Activated CD4-positive, alpha-beta T cell treated with anti-CD3 and anti-CD28 coated beads, Interleukin-2, amount 10 ng/mL, durations not matched to agents 24 days and 14 days (primary cell): ENCODE measurements at regions of chr12 and their contacts with region 1.

Region 1: DNA sequence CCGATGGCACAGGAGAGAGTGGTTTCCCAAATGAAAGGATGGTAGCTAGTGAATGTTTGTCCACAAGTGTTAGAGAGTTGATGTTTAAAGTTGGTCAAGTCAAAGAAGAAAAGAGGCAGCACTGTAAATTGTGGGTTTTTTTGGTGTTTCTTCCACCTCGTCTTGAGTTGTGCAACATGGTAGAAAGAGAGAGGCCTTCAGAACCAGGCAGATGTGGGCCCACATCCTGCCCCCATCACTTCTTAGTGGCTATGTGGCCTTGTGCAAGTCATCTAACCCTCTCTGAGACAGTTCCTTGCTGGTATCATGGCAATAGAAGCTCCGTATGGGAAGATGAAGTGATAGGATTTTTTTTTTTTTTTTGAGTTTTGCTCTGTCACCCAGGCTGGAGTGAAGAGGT is 60.8 kb downstream of the NDUFA12 start:
- DNase-seq: no peak
- H3K4me3 Mint-ChIP-seq: no peak overlapping the region
- H3K27ac Mint-ChIP-seq: peak overlapping the region; percentile 39
- H3K4me1 Mint-ChIP-seq: peaks cover 30% of the 10 kb centered on the region
- H3K27me3 Mint-ChIP-seq: peaks cover 5% of the 10 kb centered on the region

Region 2: GRCh38 chr12:95003213-95003920 is 60.7 kb after region 1 on chr12 and contains the start of gene NDUFA12:
- intact Hi-C with region 1: loop called (anchors 2 kb)
- DNase-seq: peak; percentile 99
- H3K4me3 Mint-ChIP-seq: peak within 1 kb of the TSS; percentile 95
- H3K27ac Mint-ChIP-seq: peak within 1 kb of the TSS; percentile 92
- H3K4me1 Mint-ChIP-seq: peaks cover 31% of the 10 kb centered on the region
- H3K27me3 Mint-ChIP-seq: peaks cover 1% of the 10 kb centered on the region
- total RNA-seq, gene NDUFA12: 111 and 116 TPM in 2 replicates